ENCODE measurements at regions of chr12 and their contacts with region 1.

Region 1: DNA sequence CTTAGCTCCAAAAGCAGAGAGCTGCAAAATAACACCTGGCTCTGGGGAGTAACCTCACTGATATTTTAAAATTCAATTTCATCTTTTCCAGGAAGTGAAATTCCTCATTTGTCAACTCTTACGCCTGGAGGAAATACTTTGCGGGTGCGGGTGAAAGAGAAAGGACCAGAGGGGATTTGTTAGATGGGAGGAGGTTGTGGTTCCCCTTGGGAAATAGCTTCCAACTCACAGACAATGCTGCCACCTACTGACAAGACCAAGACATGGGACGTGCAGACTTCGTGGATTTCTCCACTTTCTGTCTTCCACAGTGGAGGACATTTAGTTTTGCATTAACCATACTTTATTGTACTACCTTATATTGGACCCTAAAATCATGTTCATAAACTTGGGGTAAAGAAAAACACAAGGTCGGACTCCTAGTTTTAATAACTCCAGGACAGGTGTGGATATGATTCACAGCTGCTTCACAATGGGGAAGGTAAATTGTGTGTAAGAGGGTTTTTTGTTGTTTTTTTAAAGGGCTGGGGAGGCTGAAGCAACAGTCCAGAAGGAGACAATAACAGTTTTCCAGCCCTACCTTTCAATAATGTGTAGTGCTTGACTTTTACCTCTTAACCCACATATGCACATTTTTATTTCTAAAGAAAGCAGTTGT is 10.8 kb downstream of the FBXL14 start:
- DNase-seq: peak in 3 of 5 donors; percentile 58 to 71 (median 71)
- ATAC-seq: peak; percentile 50 to 83 (median 80)
- H3K4me3 ChIP-seq: peak overlapping the region in 9 of 12 donors; percentile 12 to 43 (median 26)
- H3K27ac ChIP-seq: no peak overlapping the region
- H3K4me1 ChIP-seq: peaks cover 0 to 39% (median 15%) of the 10 kb centered on the region in 12 donors
- H3K27me3 ChIP-seq: no peaks in the 10 kb centered on the region
- CTCF ChIP-seq: peak; percentile 73 to 96 (median 88)
- POLR2A ChIP-seq: no peak

Region 2: GRCh38 chr12:1117970-1118563 is 465.5 kb before region 1 on chr12:
- intact Hi-C with region 1: loop called (anchors 1 to 5 kb)
- DNase-seq: peak; percentile 46 to 62 (median 55)
- ATAC-seq: peak in 3 of 4 donors; percentile 61 to 73 (median 65)
- H3K4me3 ChIP-seq: no peak overlapping the region
- H3K27ac ChIP-seq: no peak overlapping the region
- H3K4me1 ChIP-seq: no peaks in the 10 kb centered on the region
- H3K27me3 ChIP-seq: no peaks in the 10 kb centered on the region
- CTCF ChIP-seq: peak; percentile 89 to 97 (median 94)
- POLR2A ChIP-seq: no peak

Region 3: DNA sequence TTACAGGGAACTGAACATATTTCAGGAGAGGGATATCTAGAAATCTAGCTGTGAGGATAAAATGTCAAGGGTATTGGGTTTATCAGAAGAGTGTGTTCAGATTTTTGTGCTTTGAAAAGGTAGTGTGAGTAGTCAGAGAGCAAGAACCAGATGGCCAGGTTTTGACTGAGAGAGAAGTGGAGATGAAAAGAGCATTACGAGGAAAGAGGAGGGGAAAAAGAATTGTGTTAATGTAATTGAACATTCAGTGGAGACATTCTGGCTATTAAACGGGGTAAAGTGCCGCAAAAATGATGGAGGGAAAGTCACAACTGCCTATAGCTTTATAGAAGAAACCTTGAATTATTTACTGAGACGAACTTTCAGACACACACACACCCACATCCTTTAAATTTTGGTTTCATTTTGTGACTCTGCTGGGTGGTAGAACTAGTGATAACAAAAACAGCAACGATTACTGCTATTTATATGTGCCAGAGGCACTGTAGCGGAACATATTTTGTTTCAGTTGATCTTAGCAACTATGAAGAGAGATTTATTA is 378.9 kb before region 1 on chr12:
- intact Hi-C with region 1: loop called in 1 of 10 experiments (anchors 10 kb)
- DNase-seq: no peak
- ATAC-seq: peak; percentile 34 to 65 (median 46)
- H3K4me3 ChIP-seq: peak overlapping the region; percentile 3 to 62 (median 51)
- H3K27ac ChIP-seq: peak overlapping the region; percentile 65 to 87 (median 79)
- H3K4me1 ChIP-seq: peaks cover 0 to 49% (median 17%) of the 10 kb centered on the region in 12 donors
- H3K27me3 ChIP-seq: no peaks in the 10 kb centered on the region
- CTCF ChIP-seq: no peak
- POLR2A ChIP-seq: no peak

Region 4: DNA sequence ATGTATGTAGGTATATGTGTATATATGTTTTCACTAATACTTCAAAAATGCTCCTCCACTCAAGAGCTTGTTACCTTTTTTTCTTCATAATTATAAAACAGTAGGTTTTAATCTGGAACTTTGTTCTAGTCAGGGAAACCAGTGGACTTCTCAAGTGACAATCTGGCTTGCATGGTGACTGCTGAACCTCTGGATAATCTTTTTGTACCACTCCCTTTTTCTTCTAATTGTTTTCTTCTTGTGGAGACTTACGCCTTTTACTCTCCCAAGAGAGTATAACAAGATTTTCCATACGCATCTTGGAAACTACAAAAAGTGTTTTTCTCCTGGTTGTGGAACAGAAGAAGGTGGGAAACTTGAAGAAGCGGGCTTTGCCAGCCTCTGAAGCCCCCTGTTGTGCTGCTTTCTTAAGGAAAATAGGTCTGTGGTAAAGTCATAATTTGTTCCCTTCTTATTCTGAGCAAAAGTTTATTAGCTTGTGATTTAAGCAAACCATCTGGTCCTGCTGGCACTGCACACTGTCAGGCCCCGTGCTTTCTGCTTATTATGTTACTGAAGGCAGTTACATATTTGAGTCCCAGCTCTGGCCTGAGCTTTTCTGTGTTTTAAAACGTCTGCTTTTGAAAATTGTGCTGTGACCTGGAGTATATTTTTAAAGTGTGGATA is 300.7 kb before region 1 on chr12:
- intact Hi-C with region 1: loop called in 4 of 10 experiments (anchors 5 to 10 kb)
- DNase-seq: peak in 4 of 5 donors; percentile 17 to 56 (median 28)
- ATAC-seq: peak; percentile 49 to 83 (median 73)
- H3K4me3 ChIP-seq: peak overlapping the region in 2 of 12 donors; percentile 19 to 26
- H3K27ac ChIP-seq: peak overlapping the region in 10 of 12 donors; percentile 16 to 76 (median 42)
- H3K4me1 ChIP-seq: peaks cover 0 to 18% (median 3%) of the 10 kb centered on the region in 12 donors
- H3K27me3 ChIP-seq: no peaks in the 10 kb centered on the region
- CTCF ChIP-seq: no peak
- POLR2A ChIP-seq: no peak

Region 5: GRCh38 chr12:1661553-1662335 is 78.2 kb after region 1 on chr12:
- intact Hi-C with region 1: no loop called
- DNase-seq: peak; percentile 90 to 95 (median 94)
- ATAC-seq: peak; percentile 68 to 91 (median 89)
- H3K4me3 ChIP-seq: peak overlapping the region in 11 of 12 donors; percentile 46 to 76 (median 62)
- H3K27ac ChIP-seq: peak overlapping the region; percentile 78 to 100 (median 96)
- H3K4me1 ChIP-seq: peaks cover 3 to 50% (median 28%) of the 10 kb centered on the region in 12 donors
- H3K27me3 ChIP-seq: no peaks in the 10 kb centered on the region
- CTCF ChIP-seq: no peak
- POLR2A ChIP-seq: peak; percentile 12 to 60

Measured in heart left ventricle (tissue), 16 donors.